Panc1 (cell line): ENCODE measurements at regions of chr2 and their contacts with region 1.

Region 1: DNA sequence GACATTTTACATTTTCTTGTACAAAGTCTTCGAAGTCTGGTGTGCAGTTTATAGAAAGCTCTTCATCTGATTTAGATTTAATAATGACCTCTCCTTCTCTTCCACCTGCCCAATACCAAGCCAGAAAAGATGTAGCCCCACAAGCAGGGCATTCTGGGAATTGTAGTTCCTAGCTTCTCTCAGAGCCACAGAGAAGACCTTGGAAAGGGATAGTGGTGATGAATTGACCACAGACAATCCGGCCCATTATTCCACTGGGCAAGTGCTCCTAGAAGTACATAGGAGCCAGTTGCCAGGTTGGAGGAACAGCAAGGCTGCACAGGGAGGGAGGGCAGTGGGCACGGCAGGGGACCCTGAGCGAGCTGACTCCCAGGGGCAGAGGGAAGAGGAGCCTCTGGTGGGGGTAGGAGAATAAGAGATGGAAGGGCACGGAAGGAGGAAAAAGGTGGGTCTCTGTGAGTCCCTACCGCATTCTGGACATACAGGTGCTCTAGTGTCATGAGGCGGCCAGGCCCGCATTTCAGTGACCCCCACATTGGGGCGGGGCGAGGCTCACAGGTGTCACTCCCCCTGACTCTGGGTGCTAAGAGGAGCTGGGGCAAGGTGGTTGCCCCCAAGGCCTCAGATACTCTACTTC is 152.5 kb upstream of the HAAO start:
- DNase-seq: no peak
- ATAC-seq: peak; percentile 69; the same call in 1 of the 2 replicates
- H3K4me3 ChIP-seq: no peak overlapping the region
- H3K27ac ChIP-seq: no peak overlapping the region
- H3K4me1 ChIP-seq: no peaks in the 10 kb centered on the region
- H3K27me3 ChIP-seq: no peaks in the 10 kb centered on the region
- CTCF ChIP-seq: no peak

Region 2: GRCh38 chr2:43484323-43484930 is 539.5 kb after region 1 on chr2:
- CTCF ChIA-PET with region 1: no interaction called
- POLR2A ChIA-PET with region 1: interaction called, 3 read pairs
- in situ Hi-C with region 1: no loop called
- intact Hi-C with region 1: loop called (anchors 5 kb)
- DNase-seq: peak; percentile 64
- ATAC-seq: peak; percentile 76; the same call in 1 of the 2 replicates
- H3K4me3 ChIP-seq: no peak overlapping the region
- H3K27ac ChIP-seq: no peak overlapping the region
- H3K4me1 ChIP-seq: no peaks in the 10 kb centered on the region; the same call in 1 of the 2 replicates
- H3K27me3 ChIP-seq: no peaks in the 10 kb centered on the region
- CTCF ChIP-seq: peak; percentile 62; the same call in 1 of the 2 replicates

Region 3: GRCh38 chr2:43542285-43542937 is 597.5 kb after region 1 on chr2:
- CTCF ChIA-PET with region 1: no interaction called
- POLR2A ChIA-PET with region 1: no interaction called
- in situ Hi-C with region 1: no loop called
- intact Hi-C with region 1: loop called (anchors 5 kb)
- DNase-seq: peak; percentile 36
- ATAC-seq: peak; percentile 78; the same call in 1 of the 2 replicates
- H3K4me3 ChIP-seq: no peak overlapping the region
- H3K27ac ChIP-seq: no peak overlapping the region
- H3K4me1 ChIP-seq: no peaks in the 10 kb centered on the region
- H3K27me3 ChIP-seq: no peaks in the 10 kb centered on the region
- CTCF ChIP-seq: peak; percentile 58; the same call in 1 of the 2 replicates